Body of pancreas (tissue), 4 donors: ENCODE measurements at regions of chr12 and their contacts with region 1.

Region 1: GRCh38 chr12:106386813-106387535 is 29.4 kb downstream of the POLR3B start:
- DNase-seq: no peak
- ATAC-seq: no peak
- H3K4me3 ChIP-seq: no peak overlapping the region
- H3K27ac ChIP-seq: no peak overlapping the region
- H3K4me1 ChIP-seq: no peaks in the 10 kb centered on the region
- H3K27me3 ChIP-seq: no peaks in the 10 kb centered on the region
- CTCF ChIP-seq: no peak
- POLR2A ChIP-seq: no peak

Region 2: GRCh38 chr12:106519607-106520021 is 132.6 kb after region 1 on chr12:
- intact Hi-C with region 1: no loop called
- DNase-seq: no peak
- ATAC-seq: no peak
- H3K4me3 ChIP-seq: no peak overlapping the region
- H3K27ac ChIP-seq: no peak overlapping the region
- H3K4me1 ChIP-seq: no peaks in the 10 kb centered on the region
- H3K27me3 ChIP-seq: no peaks in the 10 kb centered on the region
- CTCF ChIP-seq: no peak
- POLR2A ChIP-seq: no peak

Region 3: GRCh38 chr12:106919910-106920544 is 533.1 kb after region 1 on chr12:
- intact Hi-C with region 1: loop called (anchors 10 kb)
- DNase-seq: peak in 3 of 4 donors; percentile 14 to 30 (median 19)
- ATAC-seq: peak; percentile 53
- H3K4me3 ChIP-seq: no peak overlapping the region
- H3K27ac ChIP-seq: no peak overlapping the region
- H3K4me1 ChIP-seq: no peaks in the 10 kb centered on the region
- H3K27me3 ChIP-seq: no peaks in the 10 kb centered on the region
- CTCF ChIP-seq: peak; percentile 65 to 84 (median 78)
- POLR2A ChIP-seq: no peak